Activated B cell treated with CpG ODN at 0.5 μM for 24 hours (primary cell): ENCODE measurements at regions of chr3 and their contacts with region 1.

Region 1: GRCh38 chr3:113825090-113825489 is 13.5 kb upstream of the GRAMD1C start:
- DNase-seq: no peak
- ATAC-seq: peak; percentile 90
- H3K4me3 Mint-ChIP-seq: peak overlapping the region; percentile 64
- H3K27ac Mint-ChIP-seq: peak overlapping the region; percentile 71
- H3K4me1 Mint-ChIP-seq: peaks cover 43% of the 10 kb centered on the region
- H3K27me3 Mint-ChIP-seq: no peaks in the 10 kb centered on the region
- CTCF ChIP-seq: no peak

Region 2: GRCh38 chr3:113802795-113803455 is 22.2 kb before region 1 on chr3:
- CTCF ChIA-PET with region 1: no interaction called
- POLR2A ChIA-PET with region 1: interaction called, 6 read pairs
- intact Hi-C with region 1: loop called (anchors 2 kb)
- DNase-seq: no peak
- ATAC-seq: peak; percentile 58
- H3K4me3 Mint-ChIP-seq: peak overlapping the region; percentile 1
- H3K27ac Mint-ChIP-seq: peak overlapping the region; percentile 65
- H3K4me1 Mint-ChIP-seq: peaks cover 25% of the 10 kb centered on the region
- H3K27me3 Mint-ChIP-seq: no peaks in the 10 kb centered on the region
- CTCF ChIP-seq: no peak

Region 3: GRCh38 chr3:114168150-114168549 is 343.1 kb after region 1 on chr3:
- CTCF ChIA-PET with region 1: no interaction called
- POLR2A ChIA-PET with region 1: no interaction called
- intact Hi-C with region 1: no loop called
- DNase-seq: no peak
- ATAC-seq: no peak
- H3K4me3 Mint-ChIP-seq: no peak overlapping the region
- H3K27ac Mint-ChIP-seq: no peak overlapping the region
- H3K4me1 Mint-ChIP-seq: no peaks in the 10 kb centered on the region
- H3K27me3 Mint-ChIP-seq: no peaks in the 10 kb centered on the region
- CTCF ChIP-seq: no peak

Region 4: GRCh38 chr3:114362815-114363214 is 537.7 kb after region 1 on chr3:
- CTCF ChIA-PET with region 1: no interaction called
- POLR2A ChIA-PET with region 1: no interaction called
- intact Hi-C with region 1: no loop called
- DNase-seq: no peak
- ATAC-seq: peak; percentile 34
- H3K4me3 Mint-ChIP-seq: no peak overlapping the region
- H3K27ac Mint-ChIP-seq: no peak overlapping the region
- H3K4me1 Mint-ChIP-seq: peaks cover 4% of the 10 kb centered on the region
- H3K27me3 Mint-ChIP-seq: no peaks in the 10 kb centered on the region
- CTCF ChIP-seq: no peak